ENCODE measurements at regions of chr15 and their contacts with region 1.

Region 1: DNA sequence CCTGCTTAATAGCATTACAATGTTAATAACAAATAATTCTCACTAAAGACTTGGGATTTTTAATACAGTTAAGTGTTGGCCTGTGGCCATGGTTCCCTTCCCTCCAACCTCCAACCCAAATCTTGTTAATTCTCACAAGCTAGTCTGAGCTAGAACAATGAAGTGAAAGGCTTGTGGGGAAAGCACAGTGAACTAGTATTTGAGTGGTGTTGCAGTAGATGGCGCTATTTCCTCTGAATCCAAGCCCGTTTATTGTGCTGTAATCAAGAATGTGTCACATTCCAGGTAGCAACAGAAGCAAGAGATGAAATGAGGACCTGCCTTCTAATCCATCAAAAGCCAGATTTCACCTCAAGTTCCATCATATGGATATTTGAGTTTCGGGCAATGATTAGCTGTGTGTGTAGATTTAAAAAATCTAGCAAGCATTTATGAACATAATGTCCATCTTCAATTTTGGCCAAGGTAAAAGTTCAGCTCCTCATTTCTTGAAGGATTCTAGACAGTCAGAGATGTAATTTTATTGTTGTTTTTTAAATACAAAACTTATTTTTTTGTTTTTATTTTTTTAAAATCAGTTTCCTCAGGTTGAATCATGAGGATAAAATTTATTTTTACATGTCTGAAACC is 160.7 kb downstream of the SQOR start:
- DNase-seq: peak; percentile 74
- ATAC-seq: peak; percentile 80
- H3K4me3 ChIP-seq: no peak overlapping the region
- H3K27ac ChIP-seq: no peak overlapping the region
- H3K4me1 ChIP-seq: no peaks in the 10 kb centered on the region; the same call in 1 of the 2 replicates
- H3K27me3 ChIP-seq: no peaks in the 10 kb centered on the region
- CTCF ChIP-seq: peak; percentile 78

Region 2: GRCh38 chr15:45773149-45773548 is 22.4 kb before region 1 on chr15:
- CTCF ChIA-PET with region 1: no interaction called
- POLR2A ChIA-PET with region 1: no interaction called
- intact Hi-C with region 1: no loop called
- DNase-seq: no peak
- ATAC-seq: peak; percentile 27; the same call in 1 of the 2 replicates
- H3K4me3 ChIP-seq: no peak overlapping the region
- H3K27ac ChIP-seq: no peak overlapping the region
- H3K4me1 ChIP-seq: no peaks in the 10 kb centered on the region
- H3K27me3 ChIP-seq: no peaks in the 10 kb centered on the region
- CTCF ChIP-seq: no peak

Region 3: DNA sequence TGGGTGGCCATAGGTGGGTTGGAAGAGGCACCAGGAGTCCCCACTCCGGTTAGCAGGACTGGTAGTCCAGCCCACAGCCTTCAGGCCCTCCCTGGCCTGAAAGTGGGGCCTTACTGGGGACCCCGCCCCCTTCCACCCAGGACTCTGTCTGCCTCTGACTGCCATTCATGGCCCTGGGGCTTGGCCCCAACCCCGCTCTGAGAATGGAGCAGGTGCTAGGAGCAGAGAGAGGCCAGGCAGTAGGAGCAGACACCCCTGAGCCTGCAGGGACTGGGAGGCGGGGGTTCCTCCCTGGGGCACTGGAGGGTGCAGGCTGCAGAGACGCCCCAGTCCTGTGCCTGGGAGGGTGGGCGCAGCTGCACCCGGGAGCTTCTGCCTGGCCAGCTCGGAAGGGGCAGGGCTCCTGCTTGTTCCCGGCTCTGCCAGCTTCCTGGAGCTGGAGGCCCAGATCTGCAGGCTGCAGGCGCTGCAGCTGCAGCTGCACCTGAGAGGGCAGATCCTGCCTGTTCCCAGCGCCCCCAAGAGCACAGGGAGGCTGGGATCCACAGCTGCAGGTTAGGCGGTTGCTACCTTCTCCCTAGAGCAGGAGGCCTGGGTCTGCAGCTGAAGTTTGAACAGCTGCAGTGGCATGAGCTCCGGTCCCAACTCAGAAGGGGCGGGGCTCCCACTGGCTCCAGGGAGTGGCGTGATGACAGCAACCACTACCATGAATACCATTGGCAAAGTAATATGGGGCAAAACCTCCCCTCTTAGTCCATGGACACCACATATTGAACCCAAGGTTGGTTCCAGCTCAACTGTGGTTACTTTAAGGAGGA is 34.0 kb after region 1 on chr15:
- CTCF ChIA-PET with region 1: no interaction called
- POLR2A ChIA-PET with region 1: no interaction called
- intact Hi-C with region 1: no loop called
- DNase-seq: no peak
- ATAC-seq: no peak
- H3K4me3 ChIP-seq: no peak overlapping the region
- H3K27ac ChIP-seq: no peak overlapping the region
- H3K4me1 ChIP-seq: no peaks in the 10 kb centered on the region
- H3K27me3 ChIP-seq: no peaks in the 10 kb centered on the region
- CTCF ChIP-seq: no peak

Region 4: DNA sequence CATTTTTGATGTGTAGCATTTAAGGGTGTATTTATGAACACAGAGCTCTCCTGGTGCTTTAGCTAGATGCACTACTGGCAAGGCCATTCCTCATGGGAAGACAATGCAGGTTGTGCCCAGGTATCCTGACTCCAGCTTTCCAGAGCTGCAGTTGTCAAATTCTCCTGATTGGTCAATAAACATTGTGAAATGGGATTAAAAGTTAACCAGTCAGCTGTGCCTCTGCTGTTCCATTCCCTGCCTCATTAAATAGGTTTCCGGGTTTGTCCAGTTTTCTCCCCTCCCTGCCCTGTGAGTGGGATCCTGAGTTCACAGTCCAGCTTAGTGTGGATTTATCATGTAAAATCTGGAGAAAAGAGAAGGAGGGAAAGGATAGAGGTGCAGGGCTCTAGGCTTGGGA is 46.6 kb after region 1 on chr15:
- CTCF ChIA-PET with region 1: no interaction called
- POLR2A ChIA-PET with region 1: no interaction called
- intact Hi-C with region 1: no loop called
- DNase-seq: no peak
- ATAC-seq: no peak
- H3K4me3 ChIP-seq: no peak overlapping the region
- H3K27ac ChIP-seq: no peak overlapping the region
- H3K4me1 ChIP-seq: no peaks in the 10 kb centered on the region
- H3K27me3 ChIP-seq: no peaks in the 10 kb centered on the region
- CTCF ChIP-seq: no peak

Region 5: GRCh38 chr15:45919806-45920205 is 124.3 kb after region 1 on chr15:
- CTCF ChIA-PET with region 1: interaction called, 4 read pairs
- POLR2A ChIA-PET with region 1: no interaction called
- intact Hi-C with region 1: loop called (anchors 5 kb)
- DNase-seq: peak; percentile 88
- ATAC-seq: peak; percentile 100
- H3K4me3 ChIP-seq: no peak overlapping the region
- H3K27ac ChIP-seq: peak overlapping the region; percentile 45
- H3K4me1 ChIP-seq: peaks cover 14% of the 10 kb centered on the region
- H3K27me3 ChIP-seq: no peaks in the 10 kb centered on the region
- CTCF ChIP-seq: no peak

Region 6: DNA sequence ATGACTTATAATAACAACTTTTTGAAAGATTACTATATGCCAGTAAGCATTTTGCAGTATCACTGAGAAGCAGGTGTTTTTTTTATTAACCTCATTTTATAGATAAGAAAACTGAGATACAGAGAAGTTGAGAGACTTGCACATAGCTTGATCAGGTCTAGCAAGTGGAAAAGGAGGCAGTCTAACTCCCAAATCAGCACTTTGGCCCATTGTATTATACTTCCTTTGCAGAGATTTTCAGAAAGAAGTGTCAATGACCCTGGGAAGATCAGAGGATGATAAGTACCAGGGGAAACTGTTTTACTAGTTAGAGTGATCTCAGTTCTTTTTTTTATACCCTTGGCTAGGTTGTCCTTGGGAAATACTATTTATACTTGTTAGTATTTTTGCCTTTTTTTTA is 198.0 kb after region 1 on chr15:
- CTCF ChIA-PET with region 1: no interaction called
- POLR2A ChIA-PET with region 1: no interaction called
- intact Hi-C with region 1: no loop called
- DNase-seq: no peak
- ATAC-seq: no peak
- H3K4me3 ChIP-seq: no peak overlapping the region
- H3K27ac ChIP-seq: no peak overlapping the region
- H3K4me1 ChIP-seq: no peaks in the 10 kb centered on the region
- H3K27me3 ChIP-seq: no peaks in the 10 kb centered on the region
- CTCF ChIP-seq: no peak

Region 7: GRCh38 chr15:46280762-46281542 is 485.4 kb after region 1 on chr15:
- CTCF ChIA-PET with region 1: no interaction called
- POLR2A ChIA-PET with region 1: no interaction called
- intact Hi-C with region 1: loop called (anchors 2 kb)
- DNase-seq: peak; percentile 56
- ATAC-seq: peak; percentile 71
- H3K4me3 ChIP-seq: no peak overlapping the region
- H3K27ac ChIP-seq: no peak overlapping the region
- H3K4me1 ChIP-seq: no peaks in the 10 kb centered on the region
- H3K27me3 ChIP-seq: no peaks in the 10 kb centered on the region
- CTCF ChIP-seq: peak; percentile 68

Measured in PC-3 (cell line).